MCF 10A (cell line): ENCODE measurements at regions of chr3 and their contacts with region 1.

Region 1: DNA sequence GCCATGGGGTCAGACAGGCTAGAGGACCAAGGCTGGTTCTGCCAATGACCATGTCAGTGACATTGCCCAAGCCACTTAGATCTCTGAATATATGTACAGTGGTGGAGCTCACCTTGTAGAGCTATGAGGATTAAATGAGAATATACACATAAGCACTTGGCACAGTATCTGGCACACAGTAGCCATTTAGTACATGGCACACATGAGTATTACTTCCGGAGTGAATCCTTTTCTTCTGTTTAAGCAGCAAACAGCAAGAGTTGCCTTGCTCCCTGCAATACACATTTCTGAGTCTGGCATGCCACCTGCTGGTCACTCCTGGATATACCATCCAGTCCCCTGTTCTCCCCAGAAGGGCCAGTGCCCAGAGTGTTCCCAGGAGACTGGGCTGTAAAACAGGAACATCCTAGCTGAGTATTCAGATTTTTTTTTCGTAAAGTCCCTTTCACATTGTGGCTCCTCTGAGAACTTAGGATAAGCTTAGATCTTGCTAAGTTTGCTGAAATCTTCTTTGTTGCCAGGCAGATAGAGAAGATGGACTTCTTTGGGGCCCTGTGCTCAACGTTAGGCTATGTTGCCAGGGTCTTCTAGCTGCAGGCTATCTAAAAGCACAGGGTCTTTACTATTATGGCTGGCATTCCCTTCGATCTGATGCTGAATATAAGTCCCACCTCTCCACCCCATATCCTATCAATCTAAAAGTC is 203.4 kb downstream of the ADAMTS9 start:
- DNase-seq: peak; percentile 81
- H3K4me3 Mint-ChIP-seq: no peak overlapping the region
- H3K27ac Mint-ChIP-seq: no peak overlapping the region
- H3K4me1 Mint-ChIP-seq: no peaks in the 10 kb centered on the region
- H3K27me3 Mint-ChIP-seq: peaks cover 11% of the 10 kb centered on the region
- CTCF ChIP-seq: peak; percentile 94

Region 2: GRCh38 chr3:64023187-64023848 is 461.1 kb before region 1 on chr3 and contains the start of gene PSMD6:
- CTCF ChIA-PET with region 1: interaction called, 130 read pairs
- POLR2A ChIA-PET with region 1: interaction called, 5 read pairs
- intact Hi-C with region 1: no loop called
- DNase-seq: peak; percentile 81
- H3K4me3 Mint-ChIP-seq: peak within 1 kb of the TSS; percentile 80
- H3K27ac Mint-ChIP-seq: peak within 1 kb of the TSS; percentile 92
- H3K4me1 Mint-ChIP-seq: peaks cover 6% of the 10 kb centered on the region
- H3K27me3 Mint-ChIP-seq: peaks cover 11% of the 10 kb centered on the region
- CTCF ChIP-seq: peak; percentile 97
- total RNA-seq, gene PSMD6: 62.7 and 66.0 TPM in 2 replicates

Region 3: GRCh38 chr3:64224826-64225610 is 259.4 kb before region 1 on chr3 and contains the start of gene PRICKLE2:
- CTCF ChIA-PET with region 1: interaction called, 3 read pairs
- POLR2A ChIA-PET with region 1: no interaction called
- intact Hi-C with region 1: loop called (anchors 10 kb)
- DNase-seq: no peak
- H3K4me3 Mint-ChIP-seq: peak within 1 kb of the TSS; percentile 6
- H3K27ac Mint-ChIP-seq: peak within 1 kb of the TSS; percentile 7
- H3K4me1 Mint-ChIP-seq: peaks cover 11% of the 10 kb centered on the region
- H3K27me3 Mint-ChIP-seq: no peaks in the 10 kb centered on the region
- CTCF ChIP-seq: no peak
- total RNA-seq, gene PRICKLE2: 9.6 and 11.4 TPM in 2 replicates

Region 4: GRCh38 chr3:64399205-64399800 is 85.1 kb before region 1 on chr3:
- CTCF ChIA-PET with region 1: interaction called, 36 read pairs
- POLR2A ChIA-PET with region 1: no interaction called
- intact Hi-C with region 1: loop called (anchors 1 kb)
- DNase-seq: peak; percentile 78
- H3K4me3 Mint-ChIP-seq: no peak overlapping the region
- H3K27ac Mint-ChIP-seq: no peak overlapping the region
- H3K4me1 Mint-ChIP-seq: no peaks in the 10 kb centered on the region
- H3K27me3 Mint-ChIP-seq: no peaks in the 10 kb centered on the region
- CTCF ChIP-seq: peak; percentile 83

Region 5: DNA sequence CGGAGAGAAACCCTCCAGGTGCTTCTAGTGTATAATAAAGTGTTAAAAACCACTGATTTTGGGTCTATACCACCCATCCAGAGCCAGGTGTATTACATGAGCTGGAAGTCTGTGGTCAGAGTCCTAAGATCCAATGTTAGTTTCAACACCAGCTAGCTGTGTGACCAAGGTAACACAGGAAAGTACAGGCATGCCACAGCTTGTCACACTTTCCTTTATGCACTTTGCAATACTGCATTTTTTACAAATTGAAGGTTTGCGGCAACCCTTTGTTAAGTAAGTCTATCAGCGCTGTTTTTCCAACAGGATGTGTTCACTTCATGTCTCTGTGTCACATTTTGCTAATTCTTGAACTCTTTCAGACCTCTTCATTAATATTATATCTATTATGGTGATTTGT is 57.9 kb before region 1 on chr3:
- CTCF ChIA-PET with region 1: interaction called, 11 read pairs
- POLR2A ChIA-PET with region 1: no interaction called
- intact Hi-C with region 1: no loop called
- DNase-seq: peak; percentile 65
- H3K4me3 Mint-ChIP-seq: no peak overlapping the region
- H3K27ac Mint-ChIP-seq: no peak overlapping the region
- H3K4me1 Mint-ChIP-seq: peaks cover 6% of the 10 kb centered on the region
- H3K27me3 Mint-ChIP-seq: no peaks in the 10 kb centered on the region
- CTCF ChIP-seq: no peak

Region 6: GRCh38 chr3:64496752-64497490 is 12.5 kb after region 1 on chr3:
- CTCF ChIA-PET with region 1: interaction called, 36 read pairs
- POLR2A ChIA-PET with region 1: no interaction called
- intact Hi-C with region 1: no loop called
- DNase-seq: no peak
- H3K4me3 Mint-ChIP-seq: no peak overlapping the region
- H3K27ac Mint-ChIP-seq: no peak overlapping the region
- H3K4me1 Mint-ChIP-seq: no peaks in the 10 kb centered on the region
- H3K27me3 Mint-ChIP-seq: no peaks in the 10 kb centered on the region
- CTCF ChIP-seq: no peak

Region 7: DNA sequence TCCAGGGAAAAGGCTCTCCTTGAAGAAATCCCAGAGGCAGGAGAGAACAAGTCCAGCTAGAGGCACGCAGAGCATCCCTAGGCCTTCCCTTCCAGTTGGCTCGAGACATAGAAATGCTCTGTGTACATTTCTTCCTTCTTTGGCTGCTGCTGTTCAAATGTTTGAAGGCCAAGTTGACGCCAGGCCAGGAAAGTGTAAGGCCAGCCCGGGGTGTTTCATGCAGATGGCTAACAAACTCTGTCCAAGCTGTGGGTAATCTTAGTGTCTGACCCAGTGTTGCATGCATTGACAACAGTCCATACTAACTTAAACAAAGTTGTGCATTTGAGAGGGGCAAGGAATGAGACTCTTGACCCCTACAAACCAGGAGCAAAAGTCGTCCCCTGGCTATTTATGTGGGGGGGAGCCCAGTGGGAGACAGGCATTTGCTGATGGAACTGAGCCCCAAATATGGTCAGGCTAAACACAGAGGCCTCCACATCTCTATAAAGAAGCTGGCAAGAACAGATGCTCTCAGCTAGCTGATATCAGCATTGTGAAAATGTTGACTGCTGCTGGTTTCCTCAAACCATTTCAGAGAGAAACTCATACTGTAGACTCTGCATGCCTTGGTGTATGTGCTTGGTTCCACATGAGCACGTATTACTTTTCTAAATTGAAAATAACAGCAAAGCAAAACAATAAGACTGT is 63.9 kb after region 1 on chr3:
- CTCF ChIA-PET with region 1: no interaction called
- POLR2A ChIA-PET with region 1: no interaction called
- intact Hi-C with region 1: no loop called
- DNase-seq: no peak
- H3K4me3 Mint-ChIP-seq: no peak overlapping the region
- H3K27ac Mint-ChIP-seq: no peak overlapping the region
- H3K4me1 Mint-ChIP-seq: no peaks in the 10 kb centered on the region
- H3K27me3 Mint-ChIP-seq: no peaks in the 10 kb centered on the region
- CTCF ChIP-seq: no peak